ENCODE measurements at regions of chr21 and their contacts with region 1.

Region 1: DNA sequence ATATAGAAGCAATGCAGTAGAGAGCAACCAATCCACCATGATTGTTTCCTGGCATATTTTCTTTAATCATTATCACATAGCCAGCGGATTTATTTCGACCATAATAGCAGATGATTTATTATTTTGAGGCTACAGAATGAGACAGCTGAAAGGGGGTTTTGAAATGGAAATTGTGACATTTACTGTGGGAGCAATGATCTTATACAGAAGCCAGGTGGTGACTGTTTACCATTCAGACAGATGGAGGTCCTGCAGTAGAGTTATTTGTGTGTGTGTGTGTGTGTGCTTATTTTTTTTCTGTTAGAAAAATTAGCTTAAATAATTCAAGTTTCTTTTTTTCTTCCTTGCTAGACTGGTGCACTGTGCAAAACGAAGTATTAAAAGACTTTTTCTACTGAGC is 1784.5 kb downstream of the MRPL39 start:
- DNase-seq: no peak
- ATAC-seq: no peak
- H3K4me3 ChIP-seq: no peak overlapping the region
- H3K27ac ChIP-seq: no peak overlapping the region
- H3K4me1 ChIP-seq: no peaks in the 10 kb centered on the region
- H3K27me3 ChIP-seq: no peaks in the 10 kb centered on the region
- CTCF ChIP-seq: no peak

Region 2: DNA sequence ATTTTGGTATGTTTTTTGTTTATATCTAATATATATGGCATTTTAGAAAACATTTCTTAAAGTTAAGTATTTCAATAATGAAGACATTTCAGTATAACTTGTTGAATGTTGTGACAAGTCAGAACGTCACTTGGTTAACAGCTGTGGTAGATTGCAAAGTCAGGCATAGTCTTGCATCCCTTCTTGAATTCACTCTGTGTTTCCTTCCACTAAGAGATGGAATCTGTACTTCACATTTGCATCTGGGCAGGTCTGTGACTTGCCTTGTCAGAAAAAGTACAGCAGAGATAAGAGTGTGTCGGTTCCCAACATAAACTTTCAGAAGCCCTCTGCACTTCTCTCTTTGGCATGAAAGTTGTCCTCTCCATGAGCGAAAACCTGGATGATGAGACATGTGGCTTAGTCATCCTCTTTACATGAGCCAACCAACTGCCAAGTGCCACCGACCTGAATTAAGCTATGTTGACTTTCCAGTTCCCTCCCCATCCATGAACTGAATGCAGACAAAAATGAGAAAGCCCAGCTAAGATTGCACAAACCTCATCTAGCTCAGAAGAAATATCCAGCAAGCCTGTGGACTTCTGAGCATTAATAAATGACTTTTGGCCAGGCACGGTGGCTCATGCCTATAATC is 54.3 kb after region 1 on chr21:
- CTCF ChIA-PET with region 1: no interaction called
- POLR2A ChIA-PET with region 1: no interaction called
- in situ Hi-C with region 1: no loop called
- intact Hi-C with region 1: no loop called
- DNase-seq: no peak
- ATAC-seq: no peak
- H3K4me3 ChIP-seq: no peak overlapping the region
- H3K27ac ChIP-seq: no peak overlapping the region
- H3K4me1 ChIP-seq: no peaks in the 10 kb centered on the region
- H3K27me3 ChIP-seq: no peaks in the 10 kb centered on the region
- CTCF ChIP-seq: no peak

Region 3: DNA sequence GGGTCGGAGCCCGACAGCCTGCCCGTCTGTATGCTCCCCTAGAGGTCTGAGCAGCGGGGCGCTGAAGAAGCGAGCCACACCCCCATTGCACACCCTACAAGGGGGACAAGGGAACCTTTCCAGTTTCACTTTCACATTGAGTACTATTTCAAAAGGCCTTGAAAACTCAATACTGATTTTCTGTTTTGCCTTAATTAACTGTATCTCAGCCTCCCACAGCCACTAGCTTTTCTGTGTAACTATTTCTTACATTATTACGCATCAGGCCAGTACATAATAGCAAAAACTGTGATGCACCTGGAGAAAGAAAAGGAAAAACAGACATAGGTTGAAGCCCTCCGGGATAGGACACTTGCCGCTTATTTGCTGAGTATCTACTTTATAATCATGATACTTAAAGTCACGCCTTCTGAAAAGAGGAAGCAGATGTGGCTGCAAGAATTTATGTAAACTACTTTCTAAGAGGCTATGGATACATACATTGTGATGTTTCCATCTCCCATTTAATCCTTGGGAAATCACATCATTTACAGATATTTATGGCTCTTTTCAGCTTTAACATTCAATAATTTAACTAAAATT is 65.1 kb after region 1 on chr21:
- CTCF ChIA-PET with region 1: no interaction called
- POLR2A ChIA-PET with region 1: interaction called, 22 read pairs
- in situ Hi-C with region 1: no loop called
- intact Hi-C with region 1: no loop called
- DNase-seq: no peak
- ATAC-seq: peak; percentile 75
- H3K4me3 ChIP-seq: peak overlapping the region; percentile 43 to 60
- H3K27ac ChIP-seq: no peak overlapping the region
- H3K4me1 ChIP-seq: no peaks in the 10 kb centered on the region
- H3K27me3 ChIP-seq: no peaks in the 10 kb centered on the region
- CTCF ChIP-seq: no peak

Region 4: DNA sequence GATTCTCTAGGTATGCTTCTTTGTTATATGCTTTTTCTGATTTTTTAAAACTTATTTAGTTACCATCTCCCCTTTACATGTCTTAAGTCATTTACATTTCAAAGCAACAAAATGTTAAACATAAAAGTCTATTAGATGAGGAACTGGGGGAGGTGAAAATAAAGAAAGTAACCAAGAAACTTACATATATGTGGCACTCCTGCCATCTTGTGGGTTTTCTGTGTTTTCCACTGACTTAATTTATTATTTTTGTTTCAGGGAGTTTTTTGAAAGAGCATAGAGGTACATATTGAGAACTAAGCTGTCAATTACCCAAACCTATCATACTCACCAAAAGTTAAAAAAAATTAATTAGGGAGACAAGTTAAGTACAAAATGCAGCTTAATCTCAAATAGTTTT is 253.4 kb after region 1 on chr21:
- CTCF ChIA-PET with region 1: interaction called, 11 read pairs
- POLR2A ChIA-PET with region 1: no interaction called
- in situ Hi-C with region 1: no loop called
- intact Hi-C with region 1: no loop called
- DNase-seq: no peak
- ATAC-seq: no peak
- H3K4me3 ChIP-seq: no peak overlapping the region
- H3K27ac ChIP-seq: no peak overlapping the region
- H3K4me1 ChIP-seq: no peaks in the 10 kb centered on the region
- H3K27me3 ChIP-seq: no peaks in the 10 kb centered on the region
- CTCF ChIP-seq: no peak

Measured in Panc1 (cell line).